Activated CD8-positive, alpha-beta T cell treated with anti-CD3 and anti-CD28 coated beads for 36 hours (primary cell): ENCODE measurements at regions of chr3 and their contacts with region 1.

Region 1: DNA sequence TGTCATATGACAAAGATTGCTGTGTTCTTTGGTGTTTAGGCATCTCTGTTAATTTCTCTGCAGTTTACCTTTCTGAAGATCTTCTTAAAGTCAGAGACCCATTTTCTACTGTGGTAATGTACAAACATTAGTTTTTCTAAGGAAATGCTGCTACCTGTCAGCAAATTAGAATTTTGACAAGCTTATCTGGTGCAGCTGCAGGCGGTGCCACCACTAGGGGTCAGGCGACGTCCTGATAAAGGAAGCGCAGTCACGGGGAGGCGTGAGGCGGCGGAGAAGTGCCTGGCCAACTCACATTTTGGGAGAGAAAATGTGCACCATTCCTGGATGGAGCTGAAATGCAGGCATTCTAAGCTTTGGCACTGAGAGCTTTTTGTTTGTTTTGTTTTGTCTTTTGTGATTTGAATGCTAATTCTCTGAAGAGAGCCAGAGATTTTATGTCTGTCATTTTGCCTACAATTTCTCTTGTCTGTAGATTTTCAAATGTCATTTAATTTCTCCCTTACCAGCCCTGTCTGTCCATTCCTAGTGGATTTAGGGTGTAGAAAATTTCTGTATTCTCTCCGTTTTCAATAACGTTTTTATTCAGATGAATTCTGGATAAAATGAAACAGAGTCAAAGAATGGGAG is 24.9 kb upstream of the SIAH2 start:
- DNase-seq: peak; percentile 93
- ATAC-seq: peak; percentile 72
- H3K4me3 Mint-ChIP-seq: no peak overlapping the region
- H3K27ac Mint-ChIP-seq: no peak overlapping the region
- H3K4me1 Mint-ChIP-seq: peaks cover 41% of the 10 kb centered on the region
- H3K27me3 Mint-ChIP-seq: peaks cover 6% of the 10 kb centered on the region
- CTCF ChIP-seq: peak; percentile 95

Region 2: GRCh38 chr3:150528354-150528797 is 259.5 kb before region 1 on chr3:
- CTCF ChIA-PET with region 1: interaction called, 13 read pairs
- POLR2A ChIA-PET with region 1: no interaction called
- intact Hi-C with region 1: no loop called
- DNase-seq: no peak
- ATAC-seq: peak; percentile 28
- H3K4me3 Mint-ChIP-seq: no peak overlapping the region
- H3K27ac Mint-ChIP-seq: no peak overlapping the region
- H3K4me1 Mint-ChIP-seq: peaks cover 8% of the 10 kb centered on the region
- H3K27me3 Mint-ChIP-seq: no peaks in the 10 kb centered on the region
- CTCF ChIP-seq: peak; percentile 59

Region 3: DNA sequence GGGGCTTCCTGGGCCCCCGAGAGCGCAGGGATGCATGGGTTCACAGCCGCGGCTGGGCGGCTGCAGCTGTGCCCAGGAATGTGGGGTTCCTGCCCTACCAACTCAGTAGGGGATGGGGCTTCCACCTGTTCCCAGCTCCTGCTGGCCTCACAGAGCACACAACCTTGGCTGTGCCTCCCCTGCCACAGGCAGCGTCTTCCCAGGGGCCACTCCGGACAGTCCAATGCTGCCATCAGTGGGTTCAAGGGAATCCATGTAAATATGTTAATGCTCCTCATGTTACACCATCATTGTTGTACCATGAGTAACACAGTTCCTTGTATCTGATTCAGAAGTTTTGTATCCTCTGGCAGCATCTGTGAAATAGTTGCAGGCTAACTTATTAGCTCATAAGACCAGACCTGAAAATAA is 12.8 kb before region 1 on chr3:
- CTCF ChIA-PET with region 1: interaction called, 16 read pairs
- POLR2A ChIA-PET with region 1: interaction called, 5 read pairs
- intact Hi-C with region 1: no loop called
- DNase-seq: no peak
- ATAC-seq: no peak
- H3K4me3 Mint-ChIP-seq: no peak overlapping the region
- H3K27ac Mint-ChIP-seq: no peak overlapping the region
- H3K4me1 Mint-ChIP-seq: no peaks in the 10 kb centered on the region
- H3K27me3 Mint-ChIP-seq: peaks cover 1% of the 10 kb centered on the region
- CTCF ChIP-seq: no peak

Region 4: GRCh38 chr3:150806185-150806835 is 18.5 kb after region 1 on chr3:
- CTCF ChIA-PET with region 1: interaction called, 29 read pairs
- POLR2A ChIA-PET with region 1: no interaction called
- intact Hi-C with region 1: no loop called
- DNase-seq: no peak
- ATAC-seq: no peak
- H3K4me3 Mint-ChIP-seq: no peak overlapping the region
- H3K27ac Mint-ChIP-seq: no peak overlapping the region
- H3K4me1 Mint-ChIP-seq: no peaks in the 10 kb centered on the region
- H3K27me3 Mint-ChIP-seq: peaks cover 6% of the 10 kb centered on the region
- CTCF ChIP-seq: no peak

Region 5: DNA sequence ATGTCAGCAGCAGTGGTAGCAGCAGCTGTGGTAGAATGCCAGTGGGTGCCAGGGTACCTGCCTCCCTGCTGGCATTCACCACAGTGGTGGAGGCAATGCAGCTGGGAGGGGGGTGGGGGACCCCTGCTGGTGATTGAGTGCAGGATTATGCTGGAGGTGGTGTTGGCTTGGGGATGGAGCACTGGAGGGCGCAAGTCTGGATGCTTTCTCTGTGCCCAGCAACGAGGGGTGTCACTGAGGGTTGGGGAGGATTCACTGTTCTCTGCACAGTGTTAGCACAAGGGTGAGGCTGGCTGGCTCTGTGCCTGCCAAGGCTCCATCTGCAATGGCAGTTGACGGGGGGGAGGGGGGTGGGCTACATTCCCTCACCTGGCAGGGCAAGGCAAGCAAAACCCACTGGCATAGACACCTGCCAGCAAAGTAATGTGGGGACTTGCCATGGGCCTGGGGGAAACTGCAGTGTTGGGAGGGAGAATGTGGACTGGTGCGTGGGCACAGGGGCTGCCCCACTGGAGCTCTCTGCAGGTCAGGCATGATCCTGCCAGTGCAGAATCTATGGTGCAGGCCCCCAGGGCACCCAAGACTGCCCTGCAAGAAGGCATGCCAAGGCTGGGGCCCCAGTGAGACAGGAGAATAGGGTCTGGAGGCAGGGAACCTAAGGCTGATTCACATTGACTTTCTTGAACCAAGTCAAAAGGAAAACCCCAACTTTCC is 53.1 kb after region 1 on chr3:
- CTCF ChIA-PET with region 1: interaction called, 20 read pairs
- POLR2A ChIA-PET with region 1: no interaction called
- intact Hi-C with region 1: no loop called
- DNase-seq: peak; percentile 4
- ATAC-seq: no peak
- H3K4me3 Mint-ChIP-seq: no peak overlapping the region
- H3K27ac Mint-ChIP-seq: no peak overlapping the region
- H3K4me1 Mint-ChIP-seq: no peaks in the 10 kb centered on the region
- H3K27me3 Mint-ChIP-seq: peaks cover 20% of the 10 kb centered on the region
- CTCF ChIP-seq: no peak